GM12878 (cell line): ENCODE measurements at regions of chr9 and their contacts with region 1.

Region 1: DNA sequence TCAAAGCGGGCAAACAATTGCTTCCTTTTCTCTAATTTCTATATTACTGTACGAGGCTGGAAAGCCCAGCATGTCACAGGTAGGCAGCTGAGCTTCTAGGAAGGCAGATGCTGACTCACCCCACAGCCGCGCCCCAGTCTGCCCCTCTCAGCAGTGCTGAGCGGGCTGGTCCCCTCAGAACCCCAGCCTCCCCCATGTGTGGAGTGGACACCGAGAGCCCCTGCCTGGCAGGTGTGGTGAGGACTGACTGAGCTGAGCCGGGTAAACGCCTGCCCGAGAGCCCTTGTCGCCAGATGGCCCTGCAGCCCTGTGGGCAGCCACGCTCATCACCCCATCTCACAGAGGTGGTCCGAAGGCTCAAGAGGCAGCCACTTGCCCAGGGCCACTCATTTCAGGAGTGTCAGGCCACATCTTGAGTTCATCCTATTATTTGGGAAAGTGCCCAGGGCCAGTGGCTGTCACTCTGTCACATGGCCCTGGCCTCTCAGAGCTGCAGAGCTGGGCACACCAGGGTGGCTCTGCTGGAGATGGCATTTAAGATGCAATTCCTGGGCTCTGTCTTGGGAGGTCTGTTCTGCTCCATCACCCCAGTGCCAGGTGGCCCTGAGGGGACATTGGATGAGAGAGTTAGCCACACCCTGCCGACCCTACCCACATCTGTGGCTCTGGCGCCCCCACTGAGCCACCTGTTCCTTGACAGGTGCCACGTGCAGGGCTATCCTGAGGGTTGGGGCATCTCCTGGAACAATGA is 12.4 kb downstream of the CARD19 start:
- DNase-seq: no peak
- ATAC-seq: peak; percentile 76
- H3K4me3 ChIP-seq: no peak overlapping the region
- H3K27ac ChIP-seq: no peak overlapping the region
- H3K4me1 ChIP-seq: peaks cover 12% of the 10 kb centered on the region
- H3K27me3 ChIP-seq: no peaks in the 10 kb centered on the region
- CTCF ChIP-seq: no peak
- EP300 ChIP-seq: no peak
- POLR2A ChIP-seq: no peak
- RAD21 ChIP-seq: no peak

Region 2: DNA sequence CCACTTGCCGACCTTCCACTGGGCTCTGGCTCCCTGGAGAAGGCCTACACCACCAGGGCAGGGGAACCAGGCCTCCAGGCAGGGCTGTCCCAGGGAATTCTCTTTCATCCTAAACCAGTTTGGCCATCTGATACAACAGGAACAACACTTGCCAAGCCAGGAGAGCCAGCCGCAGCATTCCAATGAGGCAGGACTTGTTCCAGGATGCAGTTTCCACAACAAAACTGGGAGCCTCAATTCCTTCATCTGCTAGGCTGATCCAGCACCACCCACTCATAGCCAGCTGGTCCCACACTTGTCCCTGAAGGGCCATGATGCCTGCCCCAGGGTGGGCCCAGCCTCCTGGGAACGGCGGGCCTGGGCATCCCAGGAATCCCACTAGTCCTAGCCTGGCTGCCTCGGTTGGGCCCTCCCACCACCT is 369.8 kb before region 1 on chr9:
- CTCF ChIA-PET with region 1: no interaction called
- POLR2A ChIA-PET with region 1: no interaction called
- RAD21 ChIA-PET with region 1: no interaction called
- SMC1A ChIA-PET with region 1: no interaction called
- in situ Hi-C with region 1: no loop called
- intact Hi-C with region 1: no loop called
- DNase-seq: no peak
- ATAC-seq: no peak
- H3K4me3 ChIP-seq: no peak overlapping the region
- H3K27ac ChIP-seq: no peak overlapping the region
- H3K4me1 ChIP-seq: peaks cover 21% of the 10 kb centered on the region
- H3K27me3 ChIP-seq: no peaks in the 10 kb centered on the region
- CTCF ChIP-seq: no peak
- EP300 ChIP-seq: no peak
- POLR2A ChIP-seq: no peak
- RAD21 ChIP-seq: no peak

Region 3: DNA sequence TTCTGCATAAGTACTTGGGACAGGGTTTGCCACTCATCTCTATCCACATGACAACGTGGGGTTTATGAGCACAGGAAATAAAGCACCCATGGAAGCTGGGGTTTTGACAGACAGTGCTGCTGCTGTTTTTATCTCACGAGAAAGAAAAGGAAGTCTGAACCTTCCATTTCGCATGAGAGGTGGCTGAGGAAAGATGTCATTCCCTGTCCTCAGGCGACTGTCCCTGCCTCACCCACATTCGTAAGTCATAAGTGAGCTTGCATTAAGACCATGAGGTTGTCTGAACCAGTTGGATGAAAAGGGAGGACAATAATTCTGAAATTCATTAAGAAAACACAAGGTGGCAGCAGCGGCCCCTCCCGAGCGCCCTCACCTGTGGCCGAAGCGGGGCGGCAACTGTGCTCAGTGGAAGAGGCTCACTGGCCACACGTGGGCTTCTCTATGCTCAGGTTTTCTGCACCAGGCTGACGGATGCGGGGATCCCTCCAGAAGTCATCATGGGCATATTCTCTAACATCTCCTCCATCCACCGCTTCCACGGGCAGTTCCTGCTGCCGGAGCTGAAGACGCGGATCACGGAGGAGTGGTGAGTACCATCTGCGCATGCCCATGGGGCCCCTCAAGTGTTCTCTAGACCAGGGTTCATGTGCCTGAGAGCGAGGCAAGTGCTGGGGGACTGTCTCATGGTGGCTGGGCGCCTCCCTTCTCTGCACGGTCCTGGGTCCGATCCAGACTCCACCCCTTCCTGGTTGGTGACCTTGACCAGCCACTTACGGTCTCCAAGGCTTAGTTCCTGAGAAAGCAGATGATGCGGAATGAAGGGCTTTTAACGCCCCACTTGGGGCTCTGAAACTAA is 104.7 kb before region 1 on chr9:
- CTCF ChIA-PET with region 1: interaction called, 130 read pairs
- POLR2A ChIA-PET with region 1: interaction called, 3 read pairs
- RAD21 ChIA-PET with region 1: interaction called, 77 read pairs
- SMC1A ChIA-PET with region 1: interaction called, 29 read pairs
- in situ Hi-C with region 1: no loop called
- intact Hi-C with region 1: no loop called
- DNase-seq: peak; percentile 12
- ATAC-seq: peak; percentile 99
- H3K4me3 ChIP-seq: no peak overlapping the region
- H3K27ac ChIP-seq: no peak overlapping the region
- H3K4me1 ChIP-seq: no peaks in the 10 kb centered on the region
- H3K27me3 ChIP-seq: no peaks in the 10 kb centered on the region
- CTCF ChIP-seq: peak; percentile 66 to 85 (median 69)
- EP300 ChIP-seq: no peak
- POLR2A ChIP-seq: no peak
- RAD21 ChIP-seq: peak; percentile 80

Region 4: GRCh38 chr9:93064392-93065134 is 43.9 kb before region 1 on chr9:
- CTCF ChIA-PET with region 1: interaction called, 22 read pairs
- POLR2A ChIA-PET with region 1: interaction called, 4 read pairs
- RAD21 ChIA-PET with region 1: interaction called, 7 read pairs
- SMC1A ChIA-PET with region 1: interaction called, 6 read pairs
- in situ Hi-C with region 1: no loop called
- intact Hi-C with region 1: no loop called
- DNase-seq: peak; percentile 94
- ATAC-seq: peak; percentile 86
- H3K4me3 ChIP-seq: peak overlapping the region; percentile 65
- H3K27ac ChIP-seq: peak overlapping the region; percentile 88
- H3K4me1 ChIP-seq: peaks cover 54% of the 10 kb centered on the region
- H3K27me3 ChIP-seq: no peaks in the 10 kb centered on the region
- CTCF ChIP-seq: no peak
- EP300 ChIP-seq: peak; percentile 87 to 88
- POLR2A ChIP-seq: peak; percentile 84
- RAD21 ChIP-seq: no peak; the same call in 1 of the 2 replicates

Region 5: GRCh38 chr9:93119953-93120845 is 11.7 kb after region 1 on chr9:
- CTCF ChIA-PET with region 1: interaction called, 35 read pairs
- POLR2A ChIA-PET with region 1: interaction called, 6 read pairs
- RAD21 ChIA-PET with region 1: interaction called, 7 read pairs
- SMC1A ChIA-PET with region 1: interaction called, 12 read pairs
- in situ Hi-C with region 1: no loop called
- intact Hi-C with region 1: no loop called
- DNase-seq: no peak
- ATAC-seq: peak; percentile 96
- H3K4me3 ChIP-seq: no peak overlapping the region
- H3K27ac ChIP-seq: no peak overlapping the region
- H3K4me1 ChIP-seq: peaks cover 12% of the 10 kb centered on the region
- H3K27me3 ChIP-seq: no peaks in the 10 kb centered on the region
- CTCF ChIP-seq: peak; percentile 28 to 54 (median 33); a peak in 4 of 6 replicates
- EP300 ChIP-seq: no peak
- POLR2A ChIP-seq: no peak; the same call in 1 of the 2 replicates
- RAD21 ChIP-seq: no peak

Region 6: DNA sequence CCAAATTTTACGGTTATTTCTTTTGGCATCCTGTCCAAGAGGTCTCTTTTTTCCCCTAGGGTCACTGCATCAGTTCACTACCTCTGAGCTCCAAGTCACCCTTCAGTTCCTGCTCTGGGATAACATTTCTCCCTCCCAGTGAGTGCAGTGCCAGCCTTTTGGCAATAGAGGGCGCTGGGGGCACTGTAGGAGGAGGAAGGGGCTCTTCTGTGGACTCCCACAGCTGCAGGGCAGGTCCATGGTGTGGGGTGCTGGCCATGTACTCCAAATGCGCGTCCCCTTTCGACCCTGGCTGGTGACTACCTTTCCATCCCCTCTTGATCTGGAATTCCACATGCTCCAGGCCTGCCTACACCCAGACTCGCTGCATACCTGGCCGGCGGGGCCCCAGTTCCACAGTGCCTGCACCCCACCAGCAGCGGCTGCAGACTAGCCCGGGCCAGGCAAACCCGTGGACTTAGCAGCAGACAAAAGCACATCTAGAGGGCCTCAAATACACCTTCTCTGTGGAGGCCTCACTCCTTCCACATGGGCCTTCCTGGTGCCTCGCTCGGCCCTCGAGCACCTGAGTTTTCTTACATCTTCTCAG is 45.9 kb after region 1 on chr9:
- CTCF ChIA-PET with region 1: interaction called, 16 read pairs
- POLR2A ChIA-PET with region 1: no interaction called
- RAD21 ChIA-PET with region 1: interaction called, 6 read pairs
- SMC1A ChIA-PET with region 1: interaction called, 8 read pairs
- in situ Hi-C with region 1: no loop called
- intact Hi-C with region 1: loop called (anchors 2 kb)
- DNase-seq: no peak
- ATAC-seq: peak; percentile 28; the same call in 1 of the 3 replicates
- H3K4me3 ChIP-seq: no peak overlapping the region
- H3K27ac ChIP-seq: no peak overlapping the region
- H3K4me1 ChIP-seq: peaks cover 5% of the 10 kb centered on the region
- H3K27me3 ChIP-seq: no peaks in the 10 kb centered on the region
- CTCF ChIP-seq: peak; percentile 47 to 71 (median 64)
- EP300 ChIP-seq: no peak
- POLR2A ChIP-seq: no peak
- RAD21 ChIP-seq: peak; percentile 29; the same call in 1 of the 2 replicates

Region 7: DNA sequence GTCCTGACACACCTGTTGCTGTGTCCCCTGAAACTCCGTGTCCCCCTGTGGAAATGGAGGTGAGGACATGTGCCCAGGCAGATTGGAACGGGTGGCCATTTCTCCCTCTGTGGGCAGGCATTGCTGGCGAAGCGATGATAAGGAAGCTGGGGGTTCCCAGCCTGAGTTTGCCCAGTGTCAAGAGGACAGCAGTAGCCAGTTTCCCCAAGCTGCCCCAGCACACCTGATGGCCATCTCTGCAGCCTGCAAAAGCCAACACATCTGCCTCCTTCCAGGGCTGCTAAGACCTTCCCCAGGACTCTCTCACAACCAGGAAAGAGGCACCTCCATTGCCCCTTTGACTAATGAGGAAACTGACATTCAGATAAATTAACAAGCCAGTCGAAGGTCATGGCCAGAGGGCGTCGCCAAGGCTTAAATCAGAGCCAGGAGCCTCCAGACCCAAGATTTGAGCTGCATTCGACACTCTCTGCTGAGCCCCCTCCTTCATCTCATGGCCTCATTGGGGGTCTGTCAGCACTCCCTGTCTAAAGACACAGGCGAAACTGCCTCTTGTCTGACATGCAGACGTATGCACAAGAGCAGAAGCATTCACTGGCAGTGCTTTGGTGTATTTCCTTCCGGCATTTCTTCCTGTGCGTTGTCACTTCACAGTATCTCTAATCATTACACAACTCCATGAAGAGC is 65.0 kb after region 1 on chr9:
- CTCF ChIA-PET with region 1: no interaction called
- POLR2A ChIA-PET with region 1: no interaction called
- RAD21 ChIA-PET with region 1: no interaction called
- SMC1A ChIA-PET with region 1: no interaction called
- in situ Hi-C with region 1: no loop called
- intact Hi-C with region 1: no loop called
- DNase-seq: no peak
- ATAC-seq: no peak
- H3K4me3 ChIP-seq: no peak overlapping the region
- H3K27ac ChIP-seq: no peak overlapping the region
- H3K4me1 ChIP-seq: no peaks in the 10 kb centered on the region
- H3K27me3 ChIP-seq: peaks cover 2 to 6% of the 10 kb centered on the region in 2 experiments; a peak in 2 of 4 replicates
- CTCF ChIP-seq: no peak
- EP300 ChIP-seq: no peak
- POLR2A ChIP-seq: no peak
- RAD21 ChIP-seq: no peak

Region 8: GRCh38 chr9:93566408-93567270 is 458.2 kb after region 1 on chr9:
- CTCF ChIA-PET with region 1: interaction called, 13 read pairs
- POLR2A ChIA-PET with region 1: interaction called, 4 read pairs
- RAD21 ChIA-PET with region 1: interaction called, 5 read pairs
- SMC1A ChIA-PET with region 1: interaction called, 9 read pairs
- in situ Hi-C with region 1: no loop called
- intact Hi-C with region 1: no loop called
- DNase-seq: peak; percentile 69
- ATAC-seq: peak; percentile 97
- H3K4me3 ChIP-seq: peak overlapping the region; percentile 73
- H3K27ac ChIP-seq: peak overlapping the region; percentile 88
- H3K4me1 ChIP-seq: peaks cover 7% of the 10 kb centered on the region
- H3K27me3 ChIP-seq: no peaks in the 10 kb centered on the region
- CTCF ChIP-seq: peak; percentile 93 to 96 (median 94); a peak in 5 of 6 replicates
- EP300 ChIP-seq: no peak
- POLR2A ChIP-seq: peak; percentile 92
- RAD21 ChIP-seq: peak; percentile 71